Caco-2 (cell line): ENCODE measurements at regions of chr16 and their contacts with region 1.

Region 1: GRCh38 chr16:89489040-89489721 is 1.2 kb downstream of the ANKRD11 start:
- DNase-seq: peak; percentile 90
- H3K4me3 ChIP-seq: peak overlapping the region; percentile 79
- H3K4me3 Mint-ChIP-seq: peak overlapping the region; percentile 87
- H3K27ac Mint-ChIP-seq: peak overlapping the region; percentile 89
- H3K4me1 ChIP-seq: peaks cover 23% of the 10 kb centered on the region
- H3K4me1 Mint-ChIP-seq: peaks cover 45% of the 10 kb centered on the region
- H3K27me3 ChIP-seq: no peaks in the 10 kb centered on the region
- H3K27me3 Mint-ChIP-seq: no peaks in the 10 kb centered on the region
- CTCF ChIP-seq: peak; percentile 25 to 41

Region 2: DNA sequence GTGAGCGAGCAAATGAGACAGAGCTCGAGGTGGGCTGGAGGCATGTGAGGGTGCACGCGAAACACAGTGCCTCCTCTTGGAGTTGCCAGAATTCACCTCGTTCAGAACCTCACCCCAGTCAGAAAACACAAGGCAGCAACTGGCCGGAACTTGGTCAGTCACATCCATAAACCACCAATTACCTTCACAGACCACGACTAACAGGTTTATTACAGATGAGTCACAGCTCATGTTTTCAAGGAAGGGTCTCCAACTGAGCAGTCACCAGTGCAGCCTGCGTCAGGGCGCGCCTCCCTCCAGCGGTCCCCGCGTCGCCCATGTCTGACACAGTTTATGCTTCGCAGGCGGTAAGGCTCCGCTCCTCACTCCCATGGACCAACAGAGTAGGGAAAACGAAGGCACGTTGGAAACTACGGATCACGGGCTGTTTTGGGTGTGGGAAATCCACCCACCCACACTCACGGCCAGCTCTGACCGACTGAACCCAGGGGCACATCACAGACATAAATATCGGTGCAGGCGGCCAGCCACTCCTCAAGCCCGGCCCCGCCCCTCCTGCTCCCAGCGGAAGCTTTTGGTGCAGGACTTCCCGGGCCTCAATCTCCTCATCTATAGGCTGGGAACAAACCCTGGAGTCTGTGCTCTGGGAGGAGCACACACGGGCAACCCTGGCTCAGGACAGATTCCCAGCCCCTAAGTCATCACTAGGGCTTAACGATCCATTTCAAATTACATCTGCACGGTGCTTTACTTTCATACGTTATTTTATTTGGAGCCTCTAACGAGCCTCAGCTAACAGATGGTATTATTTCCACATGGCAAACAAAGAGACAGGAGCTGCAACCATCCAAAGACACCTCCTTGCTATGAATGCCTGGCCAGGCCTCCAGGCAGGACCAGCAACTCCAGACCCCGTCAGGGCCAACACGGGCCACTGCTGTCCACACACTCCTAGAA is 145.4 kb before region 1 on chr16:
- CTCF ChIA-PET with region 1: no interaction called
- POLR2A ChIA-PET with region 1: interaction called, 3 read pairs
- intact Hi-C with region 1: loop called (anchors 1 kb)
- DNase-seq: no peak
- H3K4me3 ChIP-seq: no peak overlapping the region
- H3K4me3 Mint-ChIP-seq: no peak overlapping the region
- H3K27ac Mint-ChIP-seq: peak overlapping the region; percentile 64
- H3K4me1 ChIP-seq: peaks cover 55% of the 10 kb centered on the region
- H3K4me1 Mint-ChIP-seq: peaks cover 58% of the 10 kb centered on the region
- H3K27me3 ChIP-seq: no peaks in the 10 kb centered on the region
- H3K27me3 Mint-ChIP-seq: no peaks in the 10 kb centered on the region
- CTCF ChIP-seq: no peak

Region 3: DNA sequence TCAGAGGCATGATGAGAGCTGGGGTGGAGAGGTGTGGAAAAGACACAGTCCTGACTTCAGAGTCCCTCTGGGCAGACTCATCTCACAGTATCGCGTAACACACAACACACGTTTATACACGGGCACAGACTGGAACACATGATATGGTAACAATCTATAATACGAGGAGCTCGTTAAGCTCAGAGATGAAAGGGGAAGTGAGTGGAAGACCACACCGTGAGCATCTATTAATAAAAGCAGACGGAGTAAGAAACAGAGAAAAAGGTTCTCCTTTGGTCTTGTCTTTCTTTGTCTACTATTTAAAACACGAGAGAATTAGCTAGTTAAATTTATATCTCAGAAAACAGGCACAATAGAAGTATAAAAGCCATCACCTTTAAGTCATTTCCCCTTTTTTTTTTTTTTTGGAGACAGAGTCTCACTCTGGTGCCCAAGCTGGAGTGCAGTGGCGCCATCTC is 12.3 kb before region 1 on chr16:
- CTCF ChIA-PET with region 1: interaction called, 4 read pairs
- POLR2A ChIA-PET with region 1: interaction called, 8 read pairs
- intact Hi-C with region 1: loop called (anchors 1 kb)
- DNase-seq: no peak
- H3K4me3 ChIP-seq: no peak overlapping the region
- H3K4me3 Mint-ChIP-seq: no peak overlapping the region
- H3K27ac Mint-ChIP-seq: peak overlapping the region; percentile 17
- H3K4me1 ChIP-seq: peaks cover 69% of the 10 kb centered on the region
- H3K4me1 Mint-ChIP-seq: peaks cover 72% of the 10 kb centered on the region
- H3K27me3 ChIP-seq: no peaks in the 10 kb centered on the region
- H3K27me3 Mint-ChIP-seq: no peaks in the 10 kb centered on the region
- CTCF ChIP-seq: no peak

Region 4: GRCh38 chr16:89502319-89502878 is 13.2 kb after region 1 on chr16:
- CTCF ChIA-PET with region 1: interaction called, 3 read pairs
- POLR2A ChIA-PET with region 1: interaction called, 9 read pairs
- intact Hi-C with region 1: loop called (anchors 1 kb)
- DNase-seq: peak; percentile 92 to 98
- H3K4me3 ChIP-seq: no peak overlapping the region
- H3K4me3 Mint-ChIP-seq: peak overlapping the region; percentile 54
- H3K27ac Mint-ChIP-seq: peak overlapping the region; percentile 91
- H3K4me1 ChIP-seq: peaks cover 42% of the 10 kb centered on the region
- H3K4me1 Mint-ChIP-seq: peaks cover 20% of the 10 kb centered on the region
- H3K27me3 ChIP-seq: no peaks in the 10 kb centered on the region
- H3K27me3 Mint-ChIP-seq: no peaks in the 10 kb centered on the region
- CTCF ChIP-seq: no peak

Region 5: DNA sequence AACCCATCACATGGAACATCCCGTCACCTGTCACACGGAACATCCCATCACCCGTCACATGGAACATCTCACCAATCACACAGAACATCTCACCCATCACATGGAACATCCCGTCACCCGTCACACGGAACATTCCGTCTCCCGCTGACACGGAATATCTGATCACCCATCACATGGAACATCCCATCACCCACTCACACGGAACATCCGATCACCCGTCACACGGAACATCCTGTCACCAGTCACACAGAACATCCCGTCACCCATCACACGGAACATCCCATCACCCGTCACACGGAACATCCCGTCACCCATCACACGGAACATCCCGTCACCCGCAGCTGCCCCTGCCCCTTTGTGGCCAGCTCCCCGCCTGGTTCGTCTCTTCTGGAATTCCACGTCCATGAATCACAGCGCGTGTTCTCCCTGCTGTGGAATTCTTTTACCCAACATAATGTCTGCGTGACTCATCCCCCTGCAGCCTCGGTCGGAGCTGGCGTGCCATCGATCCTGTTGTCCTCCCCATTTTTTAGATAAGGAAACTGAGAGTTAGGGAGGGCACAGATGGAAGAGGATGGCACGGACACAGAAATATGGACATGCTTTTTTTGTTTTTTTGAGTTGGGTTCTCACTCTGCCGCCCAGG is 92.0 kb after region 1 on chr16:
- CTCF ChIA-PET with region 1: no interaction called
- POLR2A ChIA-PET with region 1: no interaction called
- intact Hi-C with region 1: no loop called
- DNase-seq: no peak
- H3K4me3 ChIP-seq: no peak overlapping the region
- H3K4me3 Mint-ChIP-seq: no peak overlapping the region
- H3K27ac Mint-ChIP-seq: no peak overlapping the region
- H3K4me1 ChIP-seq: no peaks in the 10 kb centered on the region
- H3K4me1 Mint-ChIP-seq: no peaks in the 10 kb centered on the region
- H3K27me3 ChIP-seq: no peaks in the 10 kb centered on the region
- H3K27me3 Mint-ChIP-seq: no peaks in the 10 kb centered on the region
- CTCF ChIP-seq: no peak